T-cell (primary cell): ENCODE measurements at regions of chr1 and their contacts with region 1.

Region 1: DNA sequence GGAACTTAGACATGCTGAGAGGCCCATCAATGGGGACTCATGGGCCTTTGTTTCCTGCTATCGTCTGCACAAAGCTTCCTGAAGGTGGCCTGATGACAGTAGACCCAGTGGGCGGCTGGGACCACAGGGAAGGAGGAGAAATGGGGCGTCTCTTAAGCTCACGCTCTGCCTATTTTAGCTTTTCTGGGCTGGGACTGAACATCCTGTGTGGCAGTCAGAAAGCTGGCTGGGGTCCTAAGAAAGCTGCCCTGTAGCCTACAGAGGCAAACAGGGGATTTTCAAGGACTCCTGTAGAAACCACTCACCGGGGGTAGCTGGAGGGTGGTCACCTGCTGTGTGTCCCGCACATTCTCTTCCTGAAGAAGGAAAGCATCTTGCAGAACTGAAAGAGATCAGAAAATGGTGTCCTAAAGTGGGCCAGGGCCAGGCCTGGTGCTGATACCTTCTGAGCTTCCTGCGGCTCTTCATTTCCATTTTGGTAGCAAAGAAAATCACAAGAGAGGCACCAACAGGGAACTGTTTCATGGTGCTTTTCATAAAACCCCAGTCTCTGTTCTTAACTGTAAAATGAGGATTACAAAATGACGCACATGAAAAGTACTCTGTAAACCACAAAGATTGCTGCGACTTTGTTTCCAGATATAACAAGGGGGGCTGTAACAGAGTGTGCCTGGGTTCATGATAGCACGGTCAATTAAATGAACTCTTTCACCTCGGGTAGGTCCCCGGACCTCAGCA is 8.6 kb downstream of the ZNF496 start:
- DNase-seq: peak in 10 of 35 experiments; percentile 7 to 56 (median 17)
- ATAC-seq: peak; percentile 47 to 71 (median 56)
- H3K4me3 ChIP-seq: peak overlapping the region; percentile 2 to 33
- H3K4me3 Mint-ChIP-seq: peak overlapping the region in 2 of 3 donors; percentile 55 to 73
- H3K27ac ChIP-seq: peak overlapping the region; percentile 14
- H3K27ac Mint-ChIP-seq: peak overlapping the region in 1 of 2 donors; percentile 90
- H3K4me1 ChIP-seq: peaks cover 28 to 32% of the 10 kb centered on the region in 2 experiments
- H3K4me1 Mint-ChIP-seq: peaks cover 0 to 39% (median 32%) of the 10 kb centered on the region in 3 donors
- H3K27me3 ChIP-seq: no peaks in the 10 kb centered on the region
- H3K27me3 Mint-ChIP-seq: no peaks in the 10 kb centered on the region

Region 2: GRCh38 chr1:247487057-247487456 is 164.0 kb after region 1 on chr1:
- CTCF ChIA-PET with region 1: interaction called in 1 of 2 experiments, 11 read pairs
- POLR2A ChIA-PET with region 1: no interaction called
- DNase-seq: peak in 24 of 35 experiments; percentile 2 to 74 (median 16)
- ATAC-seq: peak; percentile 60 to 87 (median 78)
- H3K4me3 ChIP-seq: no peak overlapping the region
- H3K4me3 Mint-ChIP-seq: no peak overlapping the region
- H3K27ac ChIP-seq: no peak overlapping the region
- H3K27ac Mint-ChIP-seq: no peak overlapping the region
- H3K4me1 ChIP-seq: no peaks in the 10 kb centered on the region
- H3K4me1 Mint-ChIP-seq: no peaks in the 10 kb centered on the region
- H3K27me3 ChIP-seq: peaks cover 0 to 5% of the 10 kb centered on the region in 2 experiments
- H3K27me3 Mint-ChIP-seq: peaks cover 12 to 13% of the 10 kb centered on the region in 2 donors

Region 3: GRCh38 chr1:247562198-247562597 is 239.2 kb after region 1 on chr1:
- CTCF ChIA-PET with region 1: no interaction called
- POLR2A ChIA-PET with region 1: no interaction called
- DNase-seq: no peak
- ATAC-seq: no peak
- H3K4me3 ChIP-seq: no peak overlapping the region
- H3K4me3 Mint-ChIP-seq: no peak overlapping the region
- H3K27ac ChIP-seq: no peak overlapping the region
- H3K27ac Mint-ChIP-seq: no peak overlapping the region
- H3K4me1 ChIP-seq: no peaks in the 10 kb centered on the region
- H3K4me1 Mint-ChIP-seq: no peaks in the 10 kb centered on the region
- H3K27me3 ChIP-seq: no peaks in the 10 kb centered on the region
- H3K27me3 Mint-ChIP-seq: peaks cover 0 to 7% of the 10 kb centered on the region in 2 donors